CD8-positive, alpha-beta T cell (primary cell): ENCODE measurements at regions of chr4 and their contacts with region 1.

Region 1: GRCh38 chr4:177441803-177442622 is at the start of gene AGA:
- DNase-seq: peak; percentile 92 to 98 (median 96)
- ATAC-seq: peak; percentile 90
- H3K4me3 ChIP-seq: peak within 1 kb of the TSS; percentile 52 to 75
- H3K4me3 Mint-ChIP-seq: peak within 1 kb of the TSS; percentile 92
- H3K27ac ChIP-seq: peak within 1 kb of the TSS; percentile 85
- H3K27ac Mint-ChIP-seq: peak within 1 kb of the TSS; percentile 96
- H3K4me1 ChIP-seq: peaks cover 14% of the 10 kb centered on the region
- H3K4me1 Mint-ChIP-seq: peaks cover 35% of the 10 kb centered on the region
- H3K27me3 ChIP-seq: no peaks in the 10 kb centered on the region
- H3K27me3 Mint-ChIP-seq: no peaks in the 10 kb centered on the region
- CTCF ChIP-seq: no peak
- total RNA-seq, gene AGA: 12.1 to 15.0 TPM

Region 2: DNA sequence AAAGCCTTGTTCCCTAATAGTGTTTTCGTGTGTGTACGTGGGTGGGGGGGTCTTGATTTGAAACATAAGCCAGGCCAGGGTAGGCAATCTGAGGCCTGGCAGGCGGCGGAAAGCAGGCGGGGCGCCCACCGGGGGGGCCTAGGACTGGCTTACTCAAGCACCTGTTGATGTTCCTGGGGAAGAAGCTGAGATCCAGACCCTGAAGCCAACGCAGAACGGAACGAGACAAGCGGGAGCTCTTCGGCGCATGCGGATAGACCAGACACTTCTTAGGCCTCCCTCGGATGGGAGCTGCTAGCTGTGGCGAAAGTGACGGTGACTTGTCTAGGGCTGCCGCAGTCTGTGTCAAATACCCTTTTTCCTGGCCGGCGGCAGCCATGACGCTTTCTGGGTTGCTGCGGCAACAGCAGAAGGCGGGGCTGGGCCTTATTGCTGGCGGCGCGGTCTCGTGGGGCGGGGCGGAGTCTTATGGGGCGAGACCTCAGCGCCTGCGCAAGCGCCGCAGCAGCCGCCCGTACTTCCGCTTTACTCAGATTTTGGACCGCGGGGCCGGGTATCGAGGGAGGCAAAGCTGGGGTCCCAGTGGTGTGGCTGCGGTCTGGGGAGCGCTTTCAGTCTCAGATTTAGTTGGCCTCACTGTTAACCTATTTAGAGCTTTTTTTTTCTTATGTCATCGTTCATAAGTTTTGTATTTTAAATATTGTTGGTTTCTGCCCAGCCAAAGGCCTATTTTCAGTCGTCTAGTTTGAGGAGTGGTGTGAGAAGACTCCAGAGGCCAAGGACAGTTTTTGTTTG is 1246.6 kb before region 1 on chr4 and contains the start of gene SPATA4:
- CTCF ChIA-PET with region 1: no interaction called
- POLR2A ChIA-PET with region 1: interaction called, 3 read pairs
- intact Hi-C with region 1: loop called (anchors 1 to 5 kb)
- DNase-seq: peak; percentile 89 to 96 (median 94)
- ATAC-seq: peak; percentile 98
- H3K4me3 ChIP-seq: peak within 1 kb of the TSS; percentile 53 to 65
- H3K4me3 Mint-ChIP-seq: peak within 1 kb of the TSS; percentile 86
- H3K27ac ChIP-seq: peak within 1 kb of the TSS; percentile 34 to 66
- H3K27ac Mint-ChIP-seq: peak within 1 kb of the TSS; percentile 86
- H3K4me1 ChIP-seq: peaks cover 4% of the 10 kb centered on the region
- H3K4me1 Mint-ChIP-seq: peaks cover 9% of the 10 kb centered on the region
- H3K27me3 ChIP-seq: peaks cover 0 to 2% of the 10 kb centered on the region in 2 experiments
- H3K27me3 Mint-ChIP-seq: peaks cover 23% of the 10 kb centered on the region
- CTCF ChIP-seq: no peak
- total RNA-seq, gene SPATA4: not detected

Region 3: GRCh38 chr4:176319704-176320339 is 1122.2 kb before region 1 on chr4 and contains the start of gene SPCS3:
- CTCF ChIA-PET with region 1: no interaction called
- POLR2A ChIA-PET with region 1: no interaction called
- intact Hi-C with region 1: loop called in 1 of 2 experiments (anchors 2 kb)
- DNase-seq: peak; percentile 90 to 98 (median 95)
- ATAC-seq: peak; percentile 92
- H3K4me3 ChIP-seq: peak within 1 kb of the TSS; percentile 88 to 93
- H3K4me3 Mint-ChIP-seq: peak within 1 kb of the TSS; percentile 90
- H3K27ac ChIP-seq: peak within 1 kb of the TSS; percentile 91 to 96
- H3K27ac Mint-ChIP-seq: peak within 1 kb of the TSS; percentile 96
- H3K4me1 ChIP-seq: peaks cover 38% of the 10 kb centered on the region
- H3K4me1 Mint-ChIP-seq: peaks cover 54% of the 10 kb centered on the region
- H3K27me3 ChIP-seq: no peaks in the 10 kb centered on the region
- H3K27me3 Mint-ChIP-seq: no peaks in the 10 kb centered on the region
- CTCF ChIP-seq: no peak
- total RNA-seq, gene SPCS3: 162 to 170 TPM

Region 4: DNA sequence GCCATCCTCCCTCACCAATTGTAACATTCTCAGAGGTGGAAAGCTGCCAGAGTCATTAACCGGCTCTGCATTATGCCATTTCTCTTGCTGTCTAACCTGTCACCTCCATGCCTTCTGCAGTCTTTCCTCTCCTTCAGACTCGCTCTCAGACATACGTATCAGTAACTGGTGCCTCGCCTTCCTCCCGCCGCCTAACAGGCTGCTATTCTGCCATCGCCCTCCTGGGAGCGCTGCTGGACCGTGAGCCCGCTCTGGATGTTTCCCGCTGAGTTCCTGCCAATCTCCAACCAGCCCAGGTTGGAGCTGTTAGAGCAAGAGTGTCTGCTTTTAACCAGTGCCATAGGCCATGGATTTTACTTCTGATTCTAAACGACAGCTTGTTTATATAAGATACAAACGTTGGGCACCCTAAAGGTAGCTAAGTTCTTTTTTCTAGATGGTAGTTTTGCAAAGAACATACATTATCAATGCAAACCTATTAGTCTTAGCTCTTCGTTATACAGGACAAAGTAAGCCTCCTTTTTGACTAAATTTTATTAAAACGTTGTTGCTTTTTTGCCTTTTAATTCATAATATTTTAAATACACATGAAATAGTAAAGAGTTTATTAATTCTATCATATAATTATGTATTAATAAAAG is 191.8 kb before region 1 on chr4:
- CTCF ChIA-PET with region 1: no interaction called
- POLR2A ChIA-PET with region 1: no interaction called
- intact Hi-C with region 1: loop called in 1 of 2 experiments (anchors 5 kb)
- DNase-seq: peak; percentile 38 to 74 (median 55)
- ATAC-seq: peak; percentile 99
- H3K4me3 ChIP-seq: no peak overlapping the region
- H3K4me3 Mint-ChIP-seq: no peak overlapping the region
- H3K27ac ChIP-seq: no peak overlapping the region
- H3K27ac Mint-ChIP-seq: no peak overlapping the region
- H3K4me1 ChIP-seq: no peaks in the 10 kb centered on the region
- H3K4me1 Mint-ChIP-seq: peaks cover 11% of the 10 kb centered on the region
- H3K27me3 ChIP-seq: no peaks in the 10 kb centered on the region
- H3K27me3 Mint-ChIP-seq: peaks cover 9% of the 10 kb centered on the region
- CTCF ChIP-seq: peak; percentile 96

Region 5: DNA sequence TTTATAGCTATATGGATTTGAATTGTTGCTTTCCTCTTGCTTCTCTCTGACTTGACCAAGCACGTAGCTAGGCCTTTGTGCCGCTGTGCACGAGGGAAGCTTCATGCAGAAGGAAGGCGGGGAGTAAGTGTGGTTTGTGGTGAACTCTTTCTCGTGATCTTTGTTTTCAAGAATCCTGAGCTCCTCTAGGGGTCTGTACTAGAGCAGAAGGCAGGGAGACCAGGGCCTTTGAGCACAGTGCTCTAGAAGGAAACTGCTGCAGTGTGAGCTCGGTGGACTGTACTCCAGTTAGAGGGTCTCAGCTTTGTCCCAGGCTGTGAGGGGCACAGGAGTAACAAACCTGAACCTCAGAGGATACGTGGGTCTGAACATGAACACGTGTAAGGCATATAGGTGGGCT is 48.8 kb before region 1 on chr4:
- CTCF ChIA-PET with region 1: interaction called, 4 read pairs
- POLR2A ChIA-PET with region 1: interaction called, 37 read pairs
- intact Hi-C with region 1: loop called in 1 of 2 experiments (anchors 2 kb)
- DNase-seq: peak in 7 of 9 experiments; percentile 6 to 76 (median 50)
- ATAC-seq: peak; percentile 85
- H3K4me3 ChIP-seq: no peak overlapping the region
- H3K4me3 Mint-ChIP-seq: peak overlapping the region; percentile 69
- H3K27ac ChIP-seq: peak overlapping the region; percentile 1 to 22
- H3K27ac Mint-ChIP-seq: peak overlapping the region; percentile 96
- H3K4me1 ChIP-seq: peaks cover 30% of the 10 kb centered on the region
- H3K4me1 Mint-ChIP-seq: peaks cover 33% of the 10 kb centered on the region
- H3K27me3 ChIP-seq: no peaks in the 10 kb centered on the region
- H3K27me3 Mint-ChIP-seq: no peaks in the 10 kb centered on the region
- CTCF ChIP-seq: no peak

Region 6: GRCh38 chr4:177728361-177729152 is 286.5 kb after region 1 on chr4:
- CTCF ChIA-PET with region 1: no interaction called
- POLR2A ChIA-PET with region 1: no interaction called
- intact Hi-C with region 1: no loop called
- DNase-seq: no peak
- ATAC-seq: no peak
- H3K4me3 ChIP-seq: no peak overlapping the region
- H3K4me3 Mint-ChIP-seq: no peak overlapping the region
- H3K27ac ChIP-seq: no peak overlapping the region
- H3K27ac Mint-ChIP-seq: no peak overlapping the region
- H3K4me1 ChIP-seq: no peaks in the 10 kb centered on the region
- H3K4me1 Mint-ChIP-seq: no peaks in the 10 kb centered on the region
- H3K27me3 ChIP-seq: no peaks in the 10 kb centered on the region
- H3K27me3 Mint-ChIP-seq: peaks cover 4% of the 10 kb centered on the region
- CTCF ChIP-seq: no peak